ENCODE measurements at regions of chr7 and their contacts with region 1.

Region 1: DNA sequence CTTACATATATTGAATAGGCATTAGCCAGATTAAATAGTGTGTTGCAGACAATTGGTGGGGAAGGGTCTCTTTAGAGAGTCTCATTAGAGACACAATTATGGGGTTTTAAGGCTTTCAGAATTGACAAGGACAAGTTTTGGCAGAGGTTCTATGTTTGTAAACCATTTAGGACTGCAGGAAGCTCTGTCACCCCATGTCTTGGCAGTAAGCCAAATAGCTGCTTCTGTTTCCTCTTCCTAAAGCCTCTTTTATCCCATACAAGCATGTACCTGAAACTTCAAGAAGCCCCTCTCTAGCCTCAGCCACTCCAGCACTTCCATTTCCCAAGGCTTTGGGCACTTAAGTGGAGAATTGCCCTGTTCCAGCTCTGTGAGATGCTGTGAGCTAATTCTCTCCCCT is 21.8 kb upstream of the LRRC4 start:
- DNase-seq: no peak
- CTCF ChIP-seq: no peak

Region 2: GRCh38 chr7:128035712-128036111 is 17.3 kb before region 1 on chr7:
- CTCF ChIA-PET with region 1: interaction called, 13 read pairs
- POLR2A ChIA-PET with region 1: no interaction called
- DNase-seq: no peak
- CTCF ChIP-seq: peak; percentile 12